ENCODE measurements at regions of chr7 and their contacts with region 1.

Region 1: GRCh38 chr7:50502001-50502684 is 52.0 kb upstream of the FIGNL1 start:
- DNase-seq: peak; percentile 88 to 94
- ATAC-seq: peak; percentile 86 to 92 (median 88)
- H3K4me3 ChIP-seq: peak overlapping the region; percentile 5
- H3K27ac ChIP-seq: peak overlapping the region; percentile 94
- H3K4me1 ChIP-seq: peaks cover 60% of the 10 kb centered on the region
- H3K27me3 ChIP-seq: no peaks in the 10 kb centered on the region
- CTCF ChIP-seq: no peak

Region 2: DNA sequence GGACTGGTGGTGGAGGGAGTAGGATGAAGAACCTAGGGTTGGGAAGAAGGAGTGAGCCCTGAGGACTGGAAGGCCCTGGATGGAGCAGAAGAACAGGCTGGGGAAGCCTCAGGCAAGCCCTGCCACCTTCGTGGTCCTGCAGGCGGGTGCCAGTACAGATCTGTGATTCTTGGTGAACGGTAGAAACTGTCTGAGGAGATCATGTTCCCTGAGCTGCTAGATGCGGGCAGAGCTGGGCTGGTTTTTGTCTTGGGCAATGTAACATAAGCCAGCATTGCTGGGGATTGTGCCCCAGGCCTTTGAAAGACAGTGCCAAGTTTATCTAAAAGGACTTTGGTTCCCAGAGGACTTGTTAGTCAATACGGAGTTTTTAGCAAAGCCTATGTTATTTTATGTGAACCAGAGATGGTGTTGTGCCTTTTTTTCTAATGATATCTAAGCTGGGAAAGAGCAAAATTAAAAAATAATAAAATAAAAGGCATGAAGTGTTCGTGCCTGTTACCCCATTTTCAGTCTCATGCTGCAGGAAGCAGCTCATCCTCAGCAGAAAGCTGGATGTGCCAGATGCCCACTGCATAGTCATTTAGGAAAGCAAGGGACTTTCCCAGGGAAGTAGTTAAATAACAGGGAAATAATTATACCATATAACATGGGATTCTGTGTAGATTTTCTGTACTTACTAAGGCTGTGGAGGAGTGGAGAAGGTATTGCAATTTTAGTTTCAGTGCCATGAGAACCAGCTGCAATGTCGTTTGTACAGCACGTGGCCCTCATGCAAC is 27.6 kb before region 1 on chr7:
- intact Hi-C with region 1: loop called in 1 of 2 experiments (anchors 1 kb)
- DNase-seq: no peak
- ATAC-seq: peak; percentile 57 to 73 (median 64)
- H3K4me3 ChIP-seq: no peak overlapping the region
- H3K27ac ChIP-seq: peak overlapping the region; percentile 73
- H3K4me1 ChIP-seq: peaks cover 27% of the 10 kb centered on the region
- H3K27me3 ChIP-seq: no peaks in the 10 kb centered on the region
- CTCF ChIP-seq: no peak

Region 3: GRCh38 chr7:50486512-50486911 is 15.6 kb before region 1 on chr7:
- intact Hi-C with region 1: no loop called
- DNase-seq: no peak
- ATAC-seq: no peak
- H3K4me3 ChIP-seq: no peak overlapping the region
- H3K27ac ChIP-seq: no peak overlapping the region
- H3K4me1 ChIP-seq: no peaks in the 10 kb centered on the region
- H3K27me3 ChIP-seq: no peaks in the 10 kb centered on the region
- CTCF ChIP-seq: no peak

Region 4: GRCh38 chr7:50653126-50653864 is 151.2 kb after region 1 on chr7:
- intact Hi-C with region 1: loop called (anchors 5 kb)
- DNase-seq: peak; percentile 73 to 87
- ATAC-seq: peak; percentile 20 to 61 (median 48)
- H3K4me3 ChIP-seq: peak overlapping the region; percentile 37
- H3K27ac ChIP-seq: peak overlapping the region; percentile 96
- H3K4me1 ChIP-seq: peaks cover 63% of the 10 kb centered on the region
- H3K27me3 ChIP-seq: no peaks in the 10 kb centered on the region
- CTCF ChIP-seq: no peak

Measured in psoas muscle (tissue), 8 donors.